ENCODE measurements at regions of chr1 and their contacts with region 1.

Region 1: DNA sequence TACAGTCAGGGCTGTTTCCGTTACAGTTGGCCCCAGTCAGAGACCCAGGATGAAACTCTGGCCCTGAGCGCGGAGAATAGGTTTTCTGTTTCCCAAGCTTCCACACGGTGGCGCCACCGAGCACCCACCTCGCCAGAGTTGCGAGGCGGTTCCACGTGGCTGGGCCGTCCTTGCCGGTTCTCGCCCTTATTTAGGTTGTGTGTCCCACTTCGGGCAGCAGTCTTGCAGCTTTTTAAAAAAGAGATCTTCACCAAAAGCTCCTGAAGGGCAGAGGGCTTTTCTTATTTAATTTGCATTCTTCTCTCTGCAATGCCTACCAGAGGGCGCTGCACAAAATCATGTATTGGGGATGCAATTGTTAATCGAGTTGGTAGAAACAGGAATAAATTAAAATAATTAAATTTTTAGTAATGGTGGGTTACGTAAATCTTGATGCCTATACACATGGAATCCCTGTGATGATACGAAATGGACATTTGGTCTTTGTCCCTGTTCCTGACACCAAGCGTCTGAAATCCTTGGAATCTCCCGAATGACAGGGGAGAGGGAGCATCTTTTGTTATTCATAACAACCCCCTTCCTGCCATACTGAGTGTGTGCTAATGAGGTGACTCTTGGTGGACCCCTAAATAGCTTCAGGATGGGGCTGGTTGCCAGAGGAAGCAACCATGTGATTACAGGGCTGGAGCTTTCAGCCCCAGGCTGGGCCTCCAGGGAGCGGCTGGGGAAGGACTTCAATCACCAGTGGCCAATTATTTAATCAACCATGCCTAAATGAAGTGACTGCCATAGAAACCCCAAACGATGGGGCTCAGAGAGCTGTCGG is 5.6 kb upstream of the S100A7 start:
- DNase-seq: peak; percentile 70 to 90
- ATAC-seq: peak; percentile 82
- H3K4me3 ChIP-seq: no peak overlapping the region
- H3K27ac ChIP-seq: no peak overlapping the region
- H3K4me1 ChIP-seq: no peaks in the 10 kb centered on the region
- H3K27me3 ChIP-seq: no peaks in the 10 kb centered on the region

Region 2: DNA sequence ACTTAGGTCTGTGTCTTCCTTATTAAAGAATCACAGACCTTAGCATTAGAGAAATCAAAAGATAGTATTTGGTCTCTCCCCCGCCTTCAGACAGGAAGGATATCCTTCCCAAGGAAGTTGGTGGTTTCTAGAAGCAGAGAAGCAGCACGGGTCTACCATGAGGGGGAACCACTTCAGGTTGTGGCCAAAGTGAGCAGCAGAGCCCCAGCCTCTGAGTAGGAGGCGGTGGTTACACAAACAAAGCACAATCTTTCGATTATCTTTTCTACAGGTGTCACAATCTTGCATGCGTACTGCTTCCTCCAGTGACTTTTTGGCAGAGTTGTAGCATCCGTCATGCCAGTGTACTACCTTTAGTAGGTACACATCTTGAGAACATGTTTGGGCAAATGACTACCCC is 126.2 kb before region 1 on chr1:
- intact Hi-C with region 1: no loop called
- DNase-seq: no peak
- ATAC-seq: no peak
- H3K4me3 ChIP-seq: no peak overlapping the region
- H3K27ac ChIP-seq: no peak overlapping the region
- H3K4me1 ChIP-seq: no peaks in the 10 kb centered on the region
- H3K27me3 ChIP-seq: peaks cover 0 to 2% of the 10 kb centered on the region in 2 donors

Region 3: GRCh38 chr1:153352523-153352922 is 113.5 kb before region 1 on chr1:
- intact Hi-C with region 1: loop called in 1 of 2 experiments (anchors 10 kb)
- DNase-seq: peak; percentile 79 to 85
- ATAC-seq: peak; percentile 83
- H3K4me3 ChIP-seq: no peak overlapping the region
- H3K27ac ChIP-seq: no peak overlapping the region
- H3K4me1 ChIP-seq: no peaks in the 10 kb centered on the region
- H3K27me3 ChIP-seq: no peaks in the 10 kb centered on the region